ENCODE measurements at regions of chr5 and their contacts with region 1.

Region 1: GRCh38 chr5:163402007-163402406 is 35.4 kb upstream of the CCNG1 start:
- DNase-seq: no peak
- H3K4me3 ChIP-seq: no peak overlapping the region
- H3K4me3 Mint-ChIP-seq: no peak overlapping the region
- H3K27ac Mint-ChIP-seq: no peak overlapping the region
- H3K4me1 ChIP-seq: no peaks in the 10 kb centered on the region
- H3K4me1 Mint-ChIP-seq: no peaks in the 10 kb centered on the region
- H3K27me3 ChIP-seq: no peaks in the 10 kb centered on the region
- H3K27me3 Mint-ChIP-seq: no peaks in the 10 kb centered on the region
- CTCF ChIP-seq: no peak

Region 2: DNA sequence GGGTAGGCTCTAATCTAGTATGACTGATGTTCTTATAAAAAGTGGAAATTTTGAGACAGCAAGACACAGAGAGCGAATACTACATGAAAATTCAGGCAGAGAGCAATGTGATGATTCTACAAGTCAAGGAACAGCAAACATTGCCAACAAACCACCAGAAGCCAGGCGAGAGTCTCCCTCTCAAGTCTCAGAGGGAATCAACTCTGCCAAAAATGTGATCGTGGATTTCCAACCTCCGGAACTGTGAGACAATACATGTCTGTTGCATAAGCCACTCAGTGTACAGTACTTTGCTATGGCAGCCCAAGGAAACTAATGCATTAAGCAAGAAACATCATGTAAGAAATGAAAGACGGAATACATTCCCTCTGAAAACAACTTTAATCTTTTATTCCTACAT is 16.7 kb before region 1 on chr5:
- CTCF ChIA-PET with region 1: no interaction called
- POLR2A ChIA-PET with region 1: no interaction called
- intact Hi-C with region 1: loop called (anchors 2 kb)
- DNase-seq: no peak
- H3K4me3 ChIP-seq: no peak overlapping the region
- H3K4me3 Mint-ChIP-seq: no peak overlapping the region
- H3K27ac Mint-ChIP-seq: no peak overlapping the region
- H3K4me1 ChIP-seq: peaks cover under 1% of the 10 kb centered on the region
- H3K4me1 Mint-ChIP-seq: no peaks in the 10 kb centered on the region
- H3K27me3 ChIP-seq: no peaks in the 10 kb centered on the region
- H3K27me3 Mint-ChIP-seq: no peaks in the 10 kb centered on the region
- CTCF ChIP-seq: no peak

Measured in Caco-2 (cell line).